HepG2 (cell line): ENCODE measurements at regions of chr19 and their contacts with region 1.

Region 1: DNA sequence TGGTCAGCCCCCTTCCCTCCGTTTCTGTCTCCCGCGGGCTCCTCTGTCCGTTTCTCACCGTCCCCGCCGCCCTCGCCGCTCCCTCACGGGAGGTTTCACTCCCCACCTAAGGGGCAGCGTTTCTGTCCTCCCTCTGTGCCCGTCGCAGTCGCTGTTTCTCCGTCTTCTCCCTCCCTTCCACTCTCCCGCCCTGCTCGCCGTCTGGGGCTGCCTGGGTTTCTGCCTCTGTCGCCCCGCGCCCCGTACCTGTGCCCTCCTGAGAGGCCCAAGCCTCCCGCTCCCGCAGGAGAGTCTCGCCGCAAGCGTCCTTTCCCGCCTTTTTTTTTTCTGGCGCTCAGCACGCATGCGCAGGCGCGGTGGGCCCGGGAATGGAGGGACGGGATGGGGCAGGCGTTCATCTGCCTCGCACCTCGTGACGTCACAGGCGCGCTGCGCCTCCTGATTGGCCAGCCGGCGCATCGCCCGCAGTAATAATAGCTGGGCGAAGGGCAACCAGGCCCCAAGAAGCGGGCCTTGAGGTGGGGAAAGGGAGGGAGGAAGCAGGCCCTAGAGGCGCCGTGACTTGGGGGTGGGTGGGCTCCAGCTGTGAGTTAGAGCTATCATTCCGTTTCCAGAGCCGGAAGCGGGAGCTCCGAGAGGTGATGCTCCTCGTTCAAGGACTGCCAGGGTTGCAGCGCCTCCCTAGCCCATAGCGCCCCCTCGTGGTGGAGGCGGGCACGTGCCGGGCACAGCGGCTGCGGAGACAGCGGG is 15.4 kb downstream of the SSC5D start:
- DNase-seq: peak; percentile 64
- ATAC-seq: peak; percentile 91
- H3K4me3 ChIP-seq: peak overlapping the region in 2 of 3 experiments; percentile 39 to 54; a peak in 3 of 6 replicates
- H3K27ac ChIP-seq: no peak overlapping the region
- H3K4me1 ChIP-seq: peaks cover 19% of the 10 kb centered on the region
- H3K27me3 ChIP-seq: peaks cover 3 to 41% of the 10 kb centered on the region in 2 experiments; a peak in 4 of 5 replicates
- CTCF ChIP-seq: peak; percentile 99
- EP300 ChIP-seq: no peak
- POLR2A ChIP-seq: no peak
- RAD21 ChIP-seq: peak; percentile 96

Region 2: GRCh38 chr19:55467236-55468053 is 36.2 kb before region 1 on chr19:
- CTCF ChIA-PET with region 1: interaction called, 24 read pairs
- POLR2A ChIA-PET with region 1: interaction called, 4 read pairs
- in situ Hi-C with region 1: no loop called
- intact Hi-C with region 1: no loop called
- DNase-seq: peak; percentile 69
- ATAC-seq: peak; percentile 89
- H3K4me3 ChIP-seq: peak overlapping the region in 1 of 3 experiments; percentile 44; a peak in 1 of 6 replicates
- H3K27ac ChIP-seq: peak overlapping the region; percentile 52
- H3K4me1 ChIP-seq: peaks cover 52% of the 10 kb centered on the region
- H3K27me3 ChIP-seq: no peaks in the 10 kb centered on the region; a peak in 1 of 5 replicates
- CTCF ChIP-seq: peak; percentile 88
- EP300 ChIP-seq: peak in 1 of 2 experiments; percentile 12; a peak in 1 of 4 replicates
- POLR2A ChIP-seq: no peak
- RAD21 ChIP-seq: peak; percentile 79

Region 3: DNA sequence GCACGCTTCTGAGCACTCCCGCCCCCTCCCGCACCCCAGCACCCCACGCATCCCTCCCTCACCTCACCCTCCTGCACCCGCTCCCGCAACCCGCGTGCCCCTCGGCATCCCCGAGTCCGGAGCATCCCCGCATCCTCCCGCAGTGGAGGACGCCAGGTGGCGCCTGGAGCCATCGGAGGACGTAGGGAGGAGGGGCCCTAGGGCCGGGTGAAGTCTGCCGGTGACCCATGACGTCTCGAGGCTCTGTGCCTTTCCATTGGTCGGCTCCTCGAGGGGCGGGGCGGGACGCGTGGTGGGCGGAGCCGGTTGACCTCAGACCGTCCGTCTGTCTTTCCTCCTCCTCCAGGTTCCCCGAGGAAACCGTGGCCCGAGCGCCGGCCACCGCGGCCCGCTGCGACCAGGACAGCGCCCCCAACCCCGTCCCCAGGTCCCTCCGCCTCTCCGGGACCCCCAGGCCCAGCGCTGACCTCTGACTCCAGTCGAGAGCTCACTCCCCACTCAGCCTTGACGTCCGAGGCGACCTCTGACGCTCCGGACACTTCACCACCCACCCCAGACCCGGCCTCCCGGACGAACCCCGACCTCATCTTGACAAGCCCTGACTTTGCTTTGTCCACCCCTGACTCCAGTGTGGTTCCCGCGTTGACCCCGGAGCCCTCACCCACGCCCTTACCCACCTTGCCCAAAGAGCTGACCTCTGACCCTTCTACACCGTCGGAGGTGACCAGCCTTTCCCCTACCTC is 13.4 kb after region 1 on chr19:
- CTCF ChIA-PET with region 1: no interaction called
- POLR2A ChIA-PET with region 1: no interaction called
- in situ Hi-C with region 1: no loop called
- intact Hi-C with region 1: no loop called
- DNase-seq: peak; percentile 78
- ATAC-seq: peak; percentile 97
- H3K4me3 ChIP-seq: peak overlapping the region; percentile 47 to 79 (median 68)
- H3K27ac ChIP-seq: no peak overlapping the region
- H3K4me1 ChIP-seq: peaks cover 4% of the 10 kb centered on the region; the same call in 1 of the 2 replicates
- H3K27me3 ChIP-seq: peaks cover 0 to 22% of the 10 kb centered on the region in 2 experiments; a peak in 4 of 5 replicates
- CTCF ChIP-seq: peak; percentile 100
- EP300 ChIP-seq: no peak
- POLR2A ChIP-seq: peak in 1 of 2 experiments; percentile 46; a peak in 1 of 4 replicates
- RAD21 ChIP-seq: peak; percentile 98

Region 4: DNA sequence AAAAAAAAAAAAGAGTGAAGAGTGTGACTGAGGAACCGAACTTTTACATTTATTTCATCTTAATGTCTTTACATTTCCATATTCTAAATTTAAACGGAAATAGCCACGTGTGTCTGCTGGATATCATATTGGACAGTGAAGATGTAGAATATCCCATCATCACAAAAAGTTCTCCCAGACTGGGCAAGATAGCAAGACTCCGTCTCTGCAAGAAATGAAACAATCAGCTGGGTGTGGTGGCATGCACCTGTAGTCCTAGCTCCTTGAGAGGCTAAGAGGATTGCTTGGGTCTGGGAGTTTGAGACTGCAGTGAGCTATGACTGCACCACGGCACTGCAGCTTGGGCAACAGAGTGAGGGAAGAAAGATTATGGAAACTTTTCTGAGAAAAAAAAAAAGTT is 73.1 kb after region 1 on chr19:
- CTCF ChIA-PET with region 1: no interaction called
- POLR2A ChIA-PET with region 1: no interaction called
- in situ Hi-C with region 1: no loop called
- intact Hi-C with region 1: no loop called
- DNase-seq: no peak
- ATAC-seq: no peak
- H3K4me3 ChIP-seq: no peak overlapping the region
- H3K27ac ChIP-seq: no peak overlapping the region
- H3K4me1 ChIP-seq: peaks cover 14% of the 10 kb centered on the region
- H3K27me3 ChIP-seq: no peaks in the 10 kb centered on the region
- CTCF ChIP-seq: no peak
- EP300 ChIP-seq: no peak
- POLR2A ChIP-seq: no peak
- RAD21 ChIP-seq: no peak